A673 (cell line): ENCODE measurements at regions of chr5 and their contacts with region 1.

Region 1: GRCh38 chr5:51416149-51416548 is 32.9 kb downstream of the ISL1 start:
- DNase-seq: peak; percentile 58
- H3K4me3 ChIP-seq: no peak overlapping the region
- H3K27ac ChIP-seq: no peak overlapping the region
- H3K4me1 ChIP-seq: no peaks in the 10 kb centered on the region
- H3K27me3 ChIP-seq: no peaks in the 10 kb centered on the region
- CTCF ChIP-seq: peak; percentile 60; the same call in 1 of the 2 replicates

Region 2: GRCh38 chr5:51159164-51159563 is 257.0 kb before region 1 on chr5:
- CTCF ChIA-PET with region 1: interaction called, 13 read pairs
- POLR2A ChIA-PET with region 1: no interaction called
- intact Hi-C with region 1: no loop called
- DNase-seq: no peak
- H3K4me3 ChIP-seq: no peak overlapping the region
- H3K27ac ChIP-seq: no peak overlapping the region
- H3K4me1 ChIP-seq: no peaks in the 10 kb centered on the region
- H3K27me3 ChIP-seq: no peaks in the 10 kb centered on the region
- CTCF ChIP-seq: 0 out of 2 replicates have a peak, but pooled peaks have one; percentile 15

Region 3: DNA sequence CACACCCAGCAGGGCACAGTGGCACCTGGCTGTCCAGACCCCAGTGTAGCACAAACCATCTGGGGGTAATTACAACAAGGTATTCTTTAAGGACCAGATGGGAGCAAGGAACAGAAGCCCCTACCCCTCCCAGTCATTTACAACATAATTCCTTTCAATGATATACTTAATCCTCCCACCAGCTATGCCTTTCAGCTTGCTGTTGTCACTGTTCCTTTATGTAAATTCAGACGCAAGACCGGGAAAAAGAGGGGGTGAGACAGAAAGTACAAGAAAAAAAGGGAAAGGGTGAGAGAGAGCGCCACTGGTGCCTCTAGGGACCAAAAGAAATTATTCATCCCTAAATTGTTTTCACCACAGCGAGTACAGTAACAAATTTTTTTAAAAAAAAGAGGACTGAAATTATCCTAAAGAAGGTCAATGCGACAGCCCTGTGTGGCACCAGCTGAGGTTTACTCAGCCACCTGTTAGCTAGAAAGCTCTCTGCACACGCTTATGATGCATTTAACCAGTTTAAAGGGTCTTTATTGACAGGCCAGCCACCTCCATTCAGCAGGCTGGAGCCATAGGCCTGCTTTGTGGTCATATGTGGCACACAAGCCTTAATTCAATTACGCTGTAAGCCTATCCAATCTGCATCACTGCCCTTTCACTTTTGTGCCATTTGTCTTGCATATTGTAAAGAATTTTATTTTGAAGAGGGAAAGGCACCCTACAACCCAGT is 243.1 kb before region 1 on chr5:
- CTCF ChIA-PET with region 1: no interaction called
- POLR2A ChIA-PET with region 1: interaction called, 16 read pairs
- intact Hi-C with region 1: no loop called
- DNase-seq: peak; percentile 35
- H3K4me3 ChIP-seq: no peak overlapping the region
- H3K27ac ChIP-seq: no peak overlapping the region
- H3K4me1 ChIP-seq: peaks cover 4% of the 10 kb centered on the region
- H3K27me3 ChIP-seq: no peaks in the 10 kb centered on the region
- CTCF ChIP-seq: no peak

Region 4: DNA sequence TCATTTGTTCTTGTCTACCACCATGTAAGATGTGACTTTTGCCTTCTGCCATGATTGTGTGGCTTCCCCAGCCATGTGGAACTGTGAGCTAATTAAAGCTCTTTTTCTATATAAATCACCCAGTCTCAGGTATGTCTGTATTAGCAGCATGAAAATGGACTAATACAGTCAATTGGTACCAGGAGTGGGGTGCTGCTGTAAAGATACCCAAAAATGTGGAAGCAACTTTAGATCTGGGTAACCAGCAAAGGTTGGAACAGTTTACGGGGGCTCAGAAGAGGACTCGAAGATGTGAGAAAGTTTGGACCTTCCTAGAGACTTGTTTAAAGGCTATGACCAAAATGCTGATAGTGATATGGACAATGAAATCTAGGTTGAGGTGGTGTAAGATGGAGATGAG is 456.0 kb after region 1 on chr5:
- CTCF ChIA-PET with region 1: no interaction called
- POLR2A ChIA-PET with region 1: interaction called, 17 read pairs
- intact Hi-C with region 1: no loop called
- DNase-seq: no peak
- H3K4me3 ChIP-seq: no peak overlapping the region
- H3K27ac ChIP-seq: no peak overlapping the region
- H3K4me1 ChIP-seq: no peaks in the 10 kb centered on the region
- H3K27me3 ChIP-seq: no peaks in the 10 kb centered on the region
- CTCF ChIP-seq: no peak